Upper lobe of right lung (tissue), 1 donor: ENCODE measurements at regions of chr17 and their contacts with region 1.

Region 1: GRCh38 chr17:38469875-38470274 is 41.6 kb downstream of the ARHGAP23 start:
- DNase-seq: no peak
- ATAC-seq: no peak
- H3K4me3 ChIP-seq: no peak overlapping the region
- H3K27ac ChIP-seq: no peak overlapping the region
- H3K4me1 ChIP-seq: peaks cover 24% of the 10 kb centered on the region
- H3K27me3 ChIP-seq: no peaks in the 10 kb centered on the region
- CTCF ChIP-seq: no peak

Region 2: GRCh38 chr17:38428112-38428642 is 41.7 kb before region 1 on chr17 and contains the start of gene ARHGAP23:
- intact Hi-C with region 1: loop called (anchors 10 kb)
- DNase-seq: peak; percentile 85
- ATAC-seq: peak; percentile 76
- H3K4me3 ChIP-seq: peak within 1 kb of the TSS; percentile 85
- H3K27ac ChIP-seq: peak within 1 kb of the TSS; percentile 72
- H3K4me1 ChIP-seq: peaks cover 43% of the 10 kb centered on the region
- H3K27me3 ChIP-seq: no peaks in the 10 kb centered on the region
- CTCF ChIP-seq: no peak
- total RNA-seq, gene ARHGAP23: 85.1 TPM